ENCODE measurements at regions of chr22 and their contacts with region 1.

Region 1: GRCh38 chr22:39520054-39520891 is at the start of gene ATF4:
- DNase-seq: peak; percentile 95 to 99
- H3K4me3 ChIP-seq: peak within 1 kb of the TSS; percentile 92 to 100
- H3K27ac ChIP-seq: peak within 1 kb of the TSS; percentile 100
- H3K4me1 ChIP-seq: peaks cover 27 to 36% of the 10 kb centered on the region in 2 donors
- H3K27me3 ChIP-seq: no peaks in the 10 kb centered on the region
- CTCF ChIP-seq: peak in 1 of 3 experiments; percentile 3
- total RNA-seq, gene ATF4: 173 TPM

Region 2: GRCh38 chr22:39431821-39432251 is 88.4 kb before region 1 on chr22:
- intact Hi-C with region 1: loop called (anchors 5 kb)
- DNase-seq: peak; percentile 22 to 86
- H3K4me3 ChIP-seq: peak overlapping the region; percentile 12 to 29
- H3K27ac ChIP-seq: peak overlapping the region; percentile 95 to 96
- H3K4me1 ChIP-seq: peaks cover 7 to 23% of the 10 kb centered on the region in 2 donors
- H3K27me3 ChIP-seq: no peaks in the 10 kb centered on the region
- CTCF ChIP-seq: no peak

Measured in ascending aorta (tissue), 2 donors.